GM18951 (cell line): ENCODE measurements at regions of chr2 and their contacts with region 1.

Region 1: DNA sequence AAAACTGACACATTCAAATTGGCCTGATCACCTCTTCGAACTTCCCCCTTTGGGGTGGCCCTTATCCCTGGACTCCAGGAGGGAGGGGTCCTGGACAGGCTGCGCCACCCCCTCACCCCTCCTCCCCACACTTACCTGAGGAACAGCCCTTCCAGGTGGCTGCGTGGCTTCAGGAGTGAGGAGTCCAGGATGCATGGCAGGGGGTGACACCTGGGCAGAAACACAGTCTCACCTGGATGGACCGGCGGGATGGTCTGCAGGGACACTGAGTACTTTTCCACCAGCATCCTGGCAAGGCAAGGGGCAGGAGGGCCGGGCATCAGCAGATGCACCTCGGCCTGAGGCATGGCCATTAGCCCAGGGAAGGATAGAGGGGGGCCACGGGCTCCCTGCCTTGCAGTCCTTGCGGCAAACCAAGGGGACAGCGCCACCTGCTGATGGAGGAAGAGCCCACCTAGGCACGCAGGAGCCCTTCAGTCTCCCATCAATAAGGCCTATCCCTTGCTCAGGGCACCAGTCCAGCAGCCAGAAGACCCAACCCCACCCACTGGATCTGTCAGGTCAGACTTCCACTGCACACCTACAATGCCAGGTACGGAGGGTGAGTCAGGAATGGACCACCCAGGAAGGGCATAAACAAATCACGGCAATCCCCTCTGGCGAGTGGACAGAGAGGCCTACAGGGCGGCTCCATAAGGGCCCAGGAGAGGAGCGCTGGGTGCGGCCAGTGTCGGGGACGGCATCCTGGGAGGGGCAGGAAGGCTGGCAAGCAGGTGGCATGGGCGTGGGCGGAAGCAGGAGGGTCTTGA is 26.0 kb downstream of the FAM178B start:
- POLR2A ChIP-seq: no peak

Region 2: GRCh38 chr2:96407041-96407918 is 553.1 kb before region 1 on chr2:
- in situ Hi-C with region 1: no loop called
- POLR2A ChIP-seq: no peak

Region 3: DNA sequence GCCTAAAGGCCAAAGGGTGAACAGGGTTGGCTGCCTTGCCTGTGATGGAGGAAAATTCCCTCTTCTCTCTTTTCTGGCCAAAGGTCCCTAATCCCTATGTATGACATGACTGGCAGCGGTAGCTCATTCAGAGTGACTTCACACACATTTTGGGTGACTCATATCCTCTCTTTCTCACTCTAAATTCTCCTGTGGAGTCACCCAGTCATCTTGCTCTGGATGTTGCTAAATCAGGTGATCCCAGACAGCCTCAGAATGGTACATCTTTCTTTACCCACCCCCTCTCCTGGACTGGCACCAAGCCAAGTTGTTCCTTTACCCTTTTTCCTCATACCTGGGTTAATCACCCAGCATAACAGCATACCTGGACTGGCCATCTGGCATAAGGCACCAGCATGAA is 532.4 kb before region 1 on chr2:
- in situ Hi-C with region 1: no loop called
- POLR2A ChIP-seq: no peak

Region 4: DNA sequence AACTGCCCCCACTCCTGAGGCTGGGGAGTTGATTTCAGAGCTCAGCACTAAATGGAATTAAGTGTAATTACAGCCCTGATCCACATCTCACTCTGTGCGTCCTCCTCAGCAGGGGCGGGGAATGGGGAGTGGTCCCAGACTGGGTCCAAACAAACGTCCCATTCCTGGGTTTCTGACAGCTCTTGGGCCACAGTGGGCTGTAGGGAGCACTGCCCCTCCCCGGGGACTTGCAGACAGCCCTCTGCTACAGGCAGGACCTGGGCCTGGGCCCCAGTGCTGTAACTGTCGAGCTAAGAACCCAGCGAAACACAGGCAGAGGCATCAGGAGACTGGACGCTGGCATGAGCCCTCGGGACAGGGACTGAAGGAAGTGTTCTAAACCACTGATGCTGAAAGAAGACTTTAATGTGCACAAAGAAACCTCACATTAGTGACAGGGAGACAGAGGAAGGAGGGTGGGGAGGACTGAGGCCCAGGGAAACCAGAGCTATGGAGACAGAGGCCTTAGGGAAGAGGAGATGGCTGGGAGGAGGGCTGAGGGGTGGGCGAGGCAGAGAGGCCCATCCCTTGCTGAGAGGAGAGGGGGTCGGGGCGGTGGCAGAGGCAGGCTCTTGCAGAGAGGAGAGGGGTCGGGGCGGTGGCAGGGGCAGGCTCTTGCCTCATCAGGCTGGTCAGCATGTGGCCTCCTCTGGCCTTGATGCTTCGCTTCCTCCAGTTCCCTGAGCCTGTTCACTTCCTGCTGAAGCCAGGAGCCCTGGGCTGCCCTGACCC is 84.7 kb before region 1 on chr2:
- in situ Hi-C with region 1: loop called (anchors 5 kb)
- POLR2A ChIP-seq: no peak